Gastrocnemius medialis (tissue), 4 donors: ENCODE measurements at regions of chr9 and their contacts with region 1.

Region 1: DNA sequence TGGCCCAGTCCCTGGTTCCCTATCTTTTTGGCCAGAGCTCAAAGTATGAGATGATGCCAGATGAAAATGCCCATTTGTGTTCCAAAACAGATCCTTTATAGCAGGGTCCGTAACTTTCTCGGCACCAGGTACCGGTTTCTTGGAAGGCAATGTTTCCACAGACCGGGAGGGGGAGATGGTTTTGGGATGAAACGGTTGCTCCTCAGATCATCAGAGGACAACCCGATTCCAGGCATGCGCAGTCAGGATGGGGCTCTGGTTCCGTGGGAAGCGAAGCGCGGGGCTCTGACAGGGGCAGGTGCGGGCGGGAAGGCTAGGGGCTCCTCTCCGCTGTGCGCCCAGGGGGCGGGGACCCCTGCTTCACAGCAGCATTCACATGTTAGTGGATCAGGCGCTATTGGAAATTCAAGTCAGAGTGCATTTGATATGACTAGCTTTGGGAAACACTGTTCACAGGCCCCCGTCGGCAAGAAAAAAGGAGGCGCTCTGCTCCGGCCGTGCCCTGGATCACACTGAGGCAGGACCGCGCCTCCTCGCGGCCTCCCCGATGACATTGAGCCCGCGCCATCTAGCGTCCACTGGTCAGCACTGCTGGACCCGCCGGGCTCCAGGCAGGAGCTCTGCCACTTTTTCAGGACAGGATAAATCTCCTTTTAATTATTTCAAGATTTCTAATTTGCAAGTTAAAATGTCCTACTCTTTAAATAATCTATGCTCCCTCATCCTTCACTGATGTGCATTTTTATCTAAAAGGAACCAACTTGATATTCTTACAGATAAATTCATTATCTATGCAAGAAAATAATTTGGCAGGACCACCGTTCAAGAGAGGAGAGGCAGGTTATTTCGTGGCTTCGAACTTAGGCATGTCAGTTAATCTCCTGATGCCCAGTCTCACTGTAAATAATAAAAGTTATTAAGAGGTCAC is 190.0 kb downstream of the FANCC start:
- DNase-seq: peak; percentile 77 to 85
- ATAC-seq: peak; percentile 75 to 84
- H3K4me3 ChIP-seq: peak overlapping the region; percentile 42 to 56 (median 45)
- H3K27ac ChIP-seq: peak overlapping the region; percentile 10 to 37 (median 24)
- H3K4me1 ChIP-seq: peaks cover 8 to 14% of the 10 kb centered on the region in 2 donors
- H3K27me3 ChIP-seq: no peaks in the 10 kb centered on the region
- CTCF ChIP-seq: peak; percentile 90 to 99 (median 92)
- POLR2A ChIP-seq: no peak

Region 2: DNA sequence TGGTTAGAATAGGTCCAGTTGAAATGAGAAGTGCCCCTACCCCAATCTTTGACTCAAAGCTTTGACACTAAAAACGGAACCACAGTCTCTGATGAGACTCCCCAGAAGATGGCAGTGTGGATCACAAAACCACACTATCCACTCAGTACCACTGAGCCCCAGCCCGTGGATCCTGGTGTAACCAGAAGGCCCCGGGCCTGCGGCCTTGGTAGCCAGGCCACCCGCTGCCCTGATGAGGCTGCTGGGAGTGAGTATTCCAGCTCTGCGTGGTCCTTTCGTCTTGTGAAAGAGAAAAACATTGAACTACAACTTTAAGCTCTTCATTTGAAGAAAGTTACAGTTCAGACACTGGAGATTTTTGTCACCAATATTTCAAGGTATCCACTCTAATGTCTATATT is 446.0 kb before region 1 on chr9:
- in situ Hi-C with region 1: loop called (anchors 5 kb)
- intact Hi-C with region 1: loop called (anchors 1 kb)
- DNase-seq: peak; percentile 54 to 64
- ATAC-seq: peak; percentile 96 to 99
- H3K4me3 ChIP-seq: no peak overlapping the region
- H3K27ac ChIP-seq: peak overlapping the region in 1 of 4 donors; percentile 44
- H3K4me1 ChIP-seq: no peaks in the 10 kb centered on the region
- H3K27me3 ChIP-seq: no peaks in the 10 kb centered on the region
- CTCF ChIP-seq: peak; percentile 46 to 77 (median 72)
- POLR2A ChIP-seq: no peak

Region 3: DNA sequence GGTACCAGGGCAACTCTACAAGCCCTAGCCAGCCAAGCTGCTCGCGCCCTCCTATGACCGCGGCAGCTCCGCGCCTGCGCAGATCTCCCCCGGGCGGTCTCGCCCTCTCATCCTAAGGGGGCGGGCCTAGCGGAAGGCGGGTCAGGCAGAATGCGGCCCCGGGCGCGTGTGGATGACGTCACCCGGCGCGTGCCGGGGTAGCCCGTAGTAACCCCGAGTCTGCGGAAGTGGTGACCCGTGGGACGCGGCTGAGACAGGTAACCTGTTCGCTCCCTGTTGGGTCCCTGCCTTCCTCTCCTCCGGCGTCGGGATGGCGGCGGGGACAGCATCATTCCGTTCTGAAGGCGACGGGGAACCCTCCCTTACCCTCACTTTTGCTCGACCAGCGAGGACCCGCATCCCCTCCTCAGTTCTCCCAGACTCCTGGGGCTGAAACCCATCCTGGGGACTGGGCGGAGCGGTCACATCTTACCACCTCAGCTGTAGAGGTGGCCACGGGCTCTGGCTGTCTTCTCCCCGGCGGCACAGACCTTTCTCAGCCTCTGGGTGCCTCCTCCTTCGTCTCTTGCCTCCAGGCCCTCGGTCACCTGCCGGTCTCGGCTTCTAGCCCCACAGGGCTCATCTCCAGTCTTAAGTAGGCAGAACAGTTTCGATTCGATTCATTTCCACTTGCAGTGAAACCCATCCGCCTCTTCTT is 400.9 kb before region 1 on chr9 and contains the start of gene AOPEP:
- in situ Hi-C with region 1: no loop called
- intact Hi-C with region 1: loop called (anchors 1 kb)
- DNase-seq: peak; percentile 95 to 98
- ATAC-seq: peak; percentile 99 to 100
- H3K4me3 ChIP-seq: peak within 1 kb of the TSS; percentile 78 to 98 (median 88)
- H3K27ac ChIP-seq: peak within 1 kb of the TSS; percentile 87 to 95 (median 93)
- H3K4me1 ChIP-seq: peaks cover 10 to 12% of the 10 kb centered on the region in 2 donors
- H3K27me3 ChIP-seq: no peaks in the 10 kb centered on the region
- CTCF ChIP-seq: peak in 1 of 5 experiments; percentile 22
- POLR2A ChIP-seq: peak; percentile 75 to 76
- total RNA-seq, gene AOPEP: 56.5 to 160 (median 103) TPM

Region 4: DNA sequence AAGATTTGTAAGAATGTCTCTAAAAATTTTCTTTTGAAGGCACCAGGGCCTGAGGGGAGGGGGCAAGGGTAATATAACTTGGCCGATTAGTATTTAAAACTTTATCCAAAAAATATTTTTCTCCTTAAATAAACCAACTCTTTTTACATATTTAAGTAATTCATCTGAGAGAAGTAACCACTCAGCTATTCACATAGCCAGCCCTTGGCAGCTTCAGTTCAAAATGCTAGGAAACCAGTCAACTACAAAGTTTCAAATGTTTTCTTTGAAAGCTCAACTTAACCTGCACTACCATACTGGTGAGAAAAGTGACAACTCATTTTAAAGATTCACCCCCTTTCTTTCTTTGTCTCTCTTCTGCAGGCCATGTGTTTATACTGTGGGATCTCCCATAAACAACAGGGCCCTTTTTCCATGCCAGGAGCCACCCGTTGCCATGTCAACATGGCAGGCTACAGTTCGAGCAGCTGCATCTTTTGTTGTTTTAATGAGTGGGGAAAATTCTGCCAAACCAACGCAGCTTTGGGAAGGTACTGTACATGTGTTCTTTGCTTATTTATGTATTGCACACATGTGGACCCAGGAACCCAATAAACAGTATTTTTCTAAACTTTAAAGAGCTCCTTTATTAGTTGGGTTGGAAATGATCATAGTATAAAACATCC is 354.7 kb before region 1 on chr9:
- in situ Hi-C with region 1: loop called in 1 of 4 experiments (anchors 10 kb)
- intact Hi-C with region 1: no loop called
- DNase-seq: no peak
- ATAC-seq: no peak
- H3K4me3 ChIP-seq: no peak overlapping the region
- H3K27ac ChIP-seq: no peak overlapping the region
- H3K4me1 ChIP-seq: peaks cover 0 to 5% of the 10 kb centered on the region in 2 donors
- H3K27me3 ChIP-seq: no peaks in the 10 kb centered on the region
- CTCF ChIP-seq: no peak
- POLR2A ChIP-seq: no peak

Region 5: GRCh38 chr9:95055851-95056551 is 71.5 kb before region 1 on chr9:
- in situ Hi-C with region 1: no loop called
- intact Hi-C with region 1: no loop called
- DNase-seq: peak in 1 of 2 donors; percentile 61
- ATAC-seq: peak; percentile 86 to 91
- H3K4me3 ChIP-seq: peak overlapping the region; percentile 26 to 42 (median 38)
- H3K27ac ChIP-seq: peak overlapping the region; percentile 85 to 96 (median 91)
- H3K4me1 ChIP-seq: peaks cover 83 to 84% of the 10 kb centered on the region in 2 donors
- H3K27me3 ChIP-seq: no peaks in the 10 kb centered on the region
- CTCF ChIP-seq: no peak
- POLR2A ChIP-seq: peak; percentile 24 to 26

Region 6: DNA sequence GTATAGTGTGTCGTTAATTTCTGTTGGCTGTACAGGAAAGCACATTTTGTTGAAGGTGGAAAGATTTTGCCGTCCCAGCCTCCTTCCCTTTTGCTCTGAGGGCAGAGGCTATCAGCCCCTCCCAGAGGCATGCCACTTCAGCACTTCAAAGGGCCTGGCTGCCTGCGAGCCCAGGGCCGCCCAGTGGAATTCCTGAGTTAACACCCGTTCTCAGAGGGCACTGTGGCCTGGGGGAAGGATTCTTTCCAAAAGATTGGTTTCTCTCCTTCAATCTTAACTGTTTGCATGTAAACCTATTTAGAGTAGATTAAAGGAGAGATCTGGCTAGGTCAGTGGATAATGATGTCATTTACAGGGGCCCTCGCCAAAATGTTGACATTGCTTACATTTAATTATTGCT is 48.6 kb before region 1 on chr9:
- in situ Hi-C with region 1: no loop called
- intact Hi-C with region 1: loop called (anchors 2 kb)
- DNase-seq: peak in 1 of 2 donors; percentile 21
- ATAC-seq: no peak
- H3K4me3 ChIP-seq: no peak overlapping the region
- H3K27ac ChIP-seq: peak overlapping the region; percentile 85 to 96 (median 91)
- H3K4me1 ChIP-seq: peaks cover 84 to 87% of the 10 kb centered on the region in 2 donors
- H3K27me3 ChIP-seq: no peaks in the 10 kb centered on the region
- CTCF ChIP-seq: no peak
- POLR2A ChIP-seq: no peak

Region 7: DNA sequence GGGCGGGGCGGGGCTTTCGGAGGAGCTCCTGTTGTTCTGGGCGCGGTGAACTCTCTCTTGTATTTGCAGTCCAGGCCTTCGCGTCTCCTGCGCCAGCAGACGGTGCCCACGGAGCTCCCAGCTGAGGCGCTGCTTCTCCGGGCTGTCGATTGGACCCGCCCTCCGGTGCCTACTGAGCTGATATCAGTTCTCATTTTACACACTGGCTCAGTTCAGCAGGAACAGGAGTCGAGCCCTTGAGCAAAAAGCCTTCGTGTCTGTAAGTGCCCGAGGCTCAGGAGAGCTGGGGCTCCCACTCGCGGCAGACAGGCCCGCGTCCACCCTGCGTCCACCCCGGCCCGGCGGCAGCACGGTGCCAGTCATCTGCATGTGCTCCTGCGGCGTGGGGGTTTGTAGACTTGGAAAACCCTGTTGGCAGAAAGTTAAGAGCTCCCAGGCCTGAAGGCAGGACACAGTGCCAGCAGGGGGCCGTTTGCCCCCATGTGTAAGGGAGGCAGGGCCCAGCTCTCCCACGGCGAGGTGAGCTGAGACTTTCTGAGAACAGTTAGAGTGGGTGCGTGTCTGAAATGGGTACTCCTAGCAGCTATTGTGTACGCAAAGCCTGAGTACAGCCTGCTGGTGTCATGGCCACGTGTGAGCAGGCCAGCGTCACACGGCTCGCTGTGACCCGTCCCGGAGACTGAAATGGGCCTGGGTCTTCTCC is 41.5 kb before region 1 on chr9:
- in situ Hi-C with region 1: no loop called
- intact Hi-C with region 1: loop called (anchors 2 kb)
- DNase-seq: peak; percentile 77
- ATAC-seq: peak; percentile 18 to 47
- H3K4me3 ChIP-seq: no peak overlapping the region
- H3K27ac ChIP-seq: peak overlapping the region; percentile 84 to 96 (median 91)
- H3K4me1 ChIP-seq: peaks cover 80% of the 10 kb centered on the region in 2 donors
- H3K27me3 ChIP-seq: no peaks in the 10 kb centered on the region
- CTCF ChIP-seq: peak in 2 of 5 experiments; percentile 6 to 14
- POLR2A ChIP-seq: peak; percentile 12 to 23

Region 8: DNA sequence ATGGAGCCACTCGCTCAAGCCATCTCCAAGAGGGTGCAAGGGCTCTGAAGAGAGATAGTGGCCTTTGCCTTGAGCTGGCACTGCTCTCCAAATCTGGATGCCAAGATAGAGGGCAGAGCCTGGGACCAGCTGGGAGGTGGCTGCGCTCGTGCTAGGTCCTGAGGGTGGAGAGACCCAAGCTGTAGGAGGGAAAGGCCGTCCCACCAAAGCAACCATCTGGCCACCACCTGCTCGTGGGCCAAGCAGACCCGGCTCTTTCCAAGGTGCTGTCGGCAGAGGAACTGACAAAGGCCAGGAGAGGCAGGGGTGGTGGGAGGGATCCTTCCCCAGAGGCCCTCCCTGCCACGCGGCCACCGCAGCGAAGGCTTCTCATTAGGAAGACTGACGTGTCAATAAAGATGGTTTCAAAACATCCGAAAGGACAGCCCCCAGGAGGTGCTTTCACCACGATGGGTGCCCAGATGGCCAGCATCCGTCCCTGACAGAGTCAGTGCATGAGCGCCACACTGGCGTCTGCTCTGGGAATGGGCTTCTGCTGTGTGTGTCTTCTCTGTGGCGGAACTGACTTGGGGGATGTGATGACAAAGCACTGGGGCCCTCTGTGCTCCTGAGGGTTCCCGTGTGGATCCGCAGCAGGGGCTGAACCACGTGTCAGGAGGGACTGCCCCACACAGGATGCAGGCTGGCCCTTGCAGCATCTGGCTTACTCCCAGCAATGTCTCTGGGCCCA is 23.5 kb before region 1 on chr9:
- in situ Hi-C with region 1: no loop called
- intact Hi-C with region 1: loop called (anchors 2 kb)
- DNase-seq: no peak
- ATAC-seq: no peak
- H3K4me3 ChIP-seq: no peak overlapping the region
- H3K27ac ChIP-seq: peak overlapping the region; percentile 74 to 96 (median 89)
- H3K4me1 ChIP-seq: peaks cover 62 to 79% of the 10 kb centered on the region in 2 donors
- H3K27me3 ChIP-seq: no peaks in the 10 kb centered on the region
- CTCF ChIP-seq: no peak
- POLR2A ChIP-seq: no peak

Region 9: GRCh38 chr9:95143591-95144561 is 16.4 kb after region 1 on chr9:
- in situ Hi-C with region 1: no loop called
- intact Hi-C with region 1: no loop called
- DNase-seq: peak; percentile 77 to 88
- ATAC-seq: peak; percentile 79 to 85
- H3K4me3 ChIP-seq: no peak overlapping the region
- H3K27ac ChIP-seq: peak overlapping the region in 3 of 4 donors; percentile 25 to 60 (median 44)
- H3K4me1 ChIP-seq: no peaks in the 10 kb centered on the region
- H3K27me3 ChIP-seq: no peaks in the 10 kb centered on the region
- CTCF ChIP-seq: no peak
- POLR2A ChIP-seq: no peak